ENCODE measurements at regions of chr11 and their contacts with region 1.

Region 1: GRCh38 chr11:119816660-119817059 is 87.7 kb upstream of the NECTIN1 start:
- DNase-seq: no peak
- H3K4me3 ChIP-seq: no peak overlapping the region
- H3K27ac ChIP-seq: no peak overlapping the region
- H3K4me1 ChIP-seq: no peaks in the 10 kb centered on the region
- H3K27me3 ChIP-seq: peaks cover 0 to 20% (median 0%) of the 10 kb centered on the region in 4 donors
- CTCF ChIP-seq: no peak
- POLR2A ChIP-seq: no peak

Region 2: GRCh38 chr11:119666463-119667131 is 150.1 kb before region 1 on chr11:
- intact Hi-C with region 1: no loop called
- DNase-seq: no peak
- H3K4me3 ChIP-seq: no peak overlapping the region
- H3K27ac ChIP-seq: peak overlapping the region; percentile 58 to 77 (median 62)
- H3K4me1 ChIP-seq: peaks cover 22 to 68% (median 22%) of the 10 kb centered on the region in 3 donors
- H3K27me3 ChIP-seq: no peaks in the 10 kb centered on the region
- CTCF ChIP-seq: peak; percentile 63 to 97 (median 91)
- POLR2A ChIP-seq: no peak

Region 3: GRCh38 chr11:119907878-119908572 is 91.4 kb after region 1 on chr11:
- intact Hi-C with region 1: no loop called
- DNase-seq: no peak
- H3K4me3 ChIP-seq: peak overlapping the region in 1 of 4 donors; percentile 12
- H3K27ac ChIP-seq: peak overlapping the region in 3 of 4 donors; percentile 63 to 84 (median 77)
- H3K4me1 ChIP-seq: peaks cover 5 to 61% (median 23%) of the 10 kb centered on the region in 3 donors
- H3K27me3 ChIP-seq: peaks cover 0 to 29% (median 0%) of the 10 kb centered on the region in 4 donors
- CTCF ChIP-seq: peak in 3 of 6 experiments; percentile 28 to 57 (median 43)
- POLR2A ChIP-seq: no peak

Region 4: DNA sequence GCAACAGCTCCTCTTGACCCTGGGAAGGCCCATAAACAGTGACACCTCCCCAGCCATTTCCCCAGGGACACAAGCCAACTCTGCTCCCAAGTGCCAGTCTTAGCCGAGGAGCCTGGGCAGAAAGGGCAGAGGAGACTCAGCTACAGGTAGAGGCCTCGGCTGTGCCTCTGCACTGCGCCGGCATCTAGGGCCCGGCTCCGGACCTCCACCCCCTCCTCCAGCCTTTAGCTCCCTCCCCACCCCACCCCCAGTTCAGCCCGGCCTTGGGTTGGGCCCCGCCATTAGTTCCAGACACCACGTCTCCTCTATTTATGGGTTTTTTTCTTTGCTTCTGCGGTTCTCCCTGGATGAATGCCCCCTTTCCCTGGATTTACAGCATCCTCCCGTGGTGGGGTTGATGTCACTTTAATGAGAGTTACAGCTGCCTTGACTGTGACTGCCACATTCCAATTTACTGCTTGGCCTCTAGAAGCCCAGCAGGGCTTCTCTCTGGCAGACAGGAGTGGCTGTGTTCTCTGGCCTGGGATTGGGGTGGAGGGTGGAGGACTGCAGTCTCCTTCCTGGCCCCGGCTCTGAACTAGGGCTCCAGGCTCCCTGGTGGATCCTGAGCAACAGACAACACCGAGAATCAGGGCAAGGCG is 380.7 kb after region 1 on chr11:
- intact Hi-C with region 1: loop called (anchors 5 kb)
- DNase-seq: no peak
- H3K4me3 ChIP-seq: no peak overlapping the region
- H3K27ac ChIP-seq: peak overlapping the region in 2 of 4 donors; percentile 44 to 52
- H3K4me1 ChIP-seq: peaks cover 0 to 15% (median 0%) of the 10 kb centered on the region in 3 donors
- H3K27me3 ChIP-seq: no peaks in the 10 kb centered on the region
- CTCF ChIP-seq: no peak
- POLR2A ChIP-seq: no peak

Measured in esophagus squamous epithelium (tissue), 5 donors.